Activated CD4-positive, alpha-beta T cell treated with anti-CD3 and anti-CD28 coated beads, Interleukin-2, amount 10 ng/mL, durations not matched to agents 24 days and 14 days (primary cell): ENCODE measurements at regions of chr10 and their contacts with region 1.

Region 1: GRCh38 chr10:3043512-3044368 is 23.6 kb upstream of the PFKP start:
- DNase-seq: peak; percentile 84
- H3K4me3 Mint-ChIP-seq: no peak overlapping the region
- H3K27ac Mint-ChIP-seq: no peak overlapping the region
- H3K4me1 Mint-ChIP-seq: no peaks in the 10 kb centered on the region
- H3K27me3 Mint-ChIP-seq: peaks cover 13% of the 10 kb centered on the region

Region 2: DNA sequence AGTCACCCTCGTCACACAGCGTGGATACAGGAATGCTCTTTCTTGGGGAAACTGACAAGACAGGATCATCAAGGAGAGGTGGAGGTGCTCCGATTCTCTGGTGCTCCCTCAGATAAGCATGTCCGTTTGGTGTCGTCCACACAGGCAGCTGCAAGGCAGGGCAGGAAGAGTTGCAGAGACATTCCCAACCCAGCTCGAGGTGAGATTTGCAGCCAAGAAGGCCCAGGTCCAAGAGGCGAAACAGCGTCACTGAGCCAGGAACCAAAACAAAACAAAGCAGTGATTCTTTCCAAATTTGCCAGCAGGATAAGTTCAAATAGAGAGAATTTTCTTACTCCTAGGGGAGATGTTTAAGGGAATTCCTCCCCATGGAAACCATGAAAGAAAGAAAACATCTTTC is 362.9 kb before region 1 on chr10:
- intact Hi-C with region 1: no loop called
- DNase-seq: no peak
- H3K4me3 Mint-ChIP-seq: no peak overlapping the region
- H3K27ac Mint-ChIP-seq: no peak overlapping the region
- H3K4me1 Mint-ChIP-seq: no peaks in the 10 kb centered on the region
- H3K27me3 Mint-ChIP-seq: no peaks in the 10 kb centered on the region

Region 3: DNA sequence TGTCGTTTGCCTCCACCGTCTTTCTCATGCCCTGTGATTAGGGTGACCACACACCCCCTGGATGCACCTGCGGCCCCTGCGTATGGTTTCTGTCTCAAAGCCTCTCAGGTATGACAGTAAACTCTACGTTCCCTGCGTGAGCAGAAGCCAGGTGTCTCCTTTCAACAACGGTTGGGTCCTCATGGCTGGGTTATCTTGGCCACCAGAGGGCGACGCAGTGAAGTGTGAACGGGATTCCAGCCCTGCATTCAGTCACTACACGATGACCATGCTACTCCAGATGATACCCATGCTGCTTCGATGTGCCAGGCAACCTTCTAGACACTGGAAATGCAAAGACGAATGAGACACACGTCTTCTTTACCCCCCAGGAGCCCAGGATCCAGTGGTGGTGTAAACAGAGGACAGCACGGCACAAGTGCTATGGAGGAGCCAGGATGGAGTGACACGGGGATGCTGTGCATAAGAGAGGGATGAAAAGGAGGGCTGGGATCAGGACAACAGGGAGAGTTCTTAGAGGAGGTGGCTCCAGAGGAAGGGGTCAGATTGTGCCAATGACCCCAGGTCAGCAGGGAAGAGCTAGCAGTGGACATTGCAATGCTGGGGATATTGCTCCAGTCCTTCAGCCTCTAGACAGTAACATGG is 204.5 kb before region 1 on chr10:
- intact Hi-C with region 1: loop called (anchors 5 kb)
- DNase-seq: peak; percentile 73
- H3K4me3 Mint-ChIP-seq: no peak overlapping the region
- H3K27ac Mint-ChIP-seq: no peak overlapping the region
- H3K4me1 Mint-ChIP-seq: no peaks in the 10 kb centered on the region
- H3K27me3 Mint-ChIP-seq: peaks cover 4% of the 10 kb centered on the region

Region 4: GRCh38 chr10:2927958-2928840 is 115.5 kb before region 1 on chr10:
- intact Hi-C with region 1: loop called (anchors 1 kb)
- DNase-seq: peak; percentile 89
- H3K4me3 Mint-ChIP-seq: no peak overlapping the region
- H3K27ac Mint-ChIP-seq: no peak overlapping the region
- H3K4me1 Mint-ChIP-seq: peaks cover 9% of the 10 kb centered on the region
- H3K27me3 Mint-ChIP-seq: peaks cover 15% of the 10 kb centered on the region